ENCODE measurements at regions of chrX and their contacts with region 1.

Region 1: DNA sequence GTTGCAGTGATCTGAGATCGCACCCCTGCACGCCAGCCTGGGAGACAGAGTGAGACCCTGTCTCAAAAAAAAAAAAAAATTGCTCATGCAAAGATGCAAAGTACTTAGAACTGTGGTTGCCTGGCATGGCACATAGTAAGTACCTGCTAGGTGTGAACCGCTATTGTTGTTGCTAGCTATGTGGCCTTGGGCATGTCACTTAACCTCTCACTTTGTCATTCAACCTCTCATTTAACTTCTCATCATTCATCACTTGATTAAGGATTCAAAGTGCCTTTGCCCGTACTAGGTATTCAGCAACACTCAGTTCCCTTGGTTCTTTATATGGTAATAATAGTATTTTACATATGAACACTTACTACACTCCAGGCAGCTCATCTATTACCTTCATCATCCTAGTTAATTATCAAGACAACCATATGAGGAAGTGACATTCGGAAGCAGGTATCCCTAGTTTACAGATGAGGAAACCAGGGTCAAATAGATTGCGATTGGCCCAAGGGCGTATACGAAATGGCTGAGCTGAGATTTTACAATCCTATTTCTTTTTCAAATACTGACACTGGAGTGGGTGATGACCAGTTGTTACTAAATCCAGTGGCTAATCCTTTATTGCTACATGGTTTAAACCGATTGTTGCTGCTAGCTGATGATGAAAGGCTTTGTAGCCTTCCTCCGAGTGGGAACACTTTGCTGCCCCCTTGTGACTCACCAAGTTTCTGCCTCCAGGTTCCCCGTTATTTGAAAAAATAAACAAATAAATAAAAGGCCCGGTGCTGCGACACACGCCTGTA is 28.8 kb upstream of the SOWAHD start:
- DNase-seq: peak; percentile 47 to 63
- H3K4me3 ChIP-seq: no peak overlapping the region
- H3K4me3 Mint-ChIP-seq: no peak overlapping the region
- H3K27ac Mint-ChIP-seq: no peak overlapping the region
- H3K4me1 ChIP-seq: no peaks in the 10 kb centered on the region
- H3K4me1 Mint-ChIP-seq: no peaks in the 10 kb centered on the region
- H3K27me3 ChIP-seq: no peaks in the 10 kb centered on the region
- H3K27me3 Mint-ChIP-seq: peaks cover 7% of the 10 kb centered on the region
- CTCF ChIP-seq: peak; percentile 57 to 69

Region 2: DNA sequence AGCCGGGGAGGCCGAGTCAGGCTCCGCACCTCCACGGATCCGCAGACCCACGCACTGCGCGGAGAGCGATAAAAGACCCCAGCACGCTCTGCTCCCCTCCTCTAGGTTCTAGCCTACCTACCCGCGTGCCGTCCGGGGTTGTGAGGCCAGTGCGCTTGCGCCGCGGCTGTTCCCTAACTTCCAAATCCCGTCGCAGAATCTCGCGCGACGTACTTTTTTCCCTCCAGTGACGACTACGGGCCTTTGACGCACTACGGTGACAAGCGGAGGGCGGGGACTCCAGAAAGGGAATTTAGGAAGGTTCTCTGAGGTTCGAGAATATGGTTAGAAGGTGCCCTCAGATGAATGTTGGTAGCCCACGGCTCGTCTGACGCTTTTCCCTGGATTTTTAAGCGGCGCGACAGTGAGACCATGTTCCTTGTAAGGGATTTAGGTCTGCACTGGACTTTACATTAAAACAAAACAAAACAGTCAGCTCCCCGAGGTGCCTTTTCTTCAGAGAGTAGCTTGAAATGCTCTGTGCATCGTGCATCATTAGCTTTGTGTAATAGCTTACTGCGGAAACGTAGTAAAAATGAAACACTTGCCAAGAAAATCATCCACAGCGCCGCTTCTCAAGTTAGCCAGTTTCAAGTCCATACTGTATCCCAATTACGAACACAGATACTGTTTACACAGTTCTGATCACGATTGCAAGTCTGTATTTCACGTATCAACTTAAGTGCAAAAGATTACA is 123.2 kb before region 1 on chrX and contains the start of gene NKRF:
- CTCF ChIA-PET with region 1: interaction called, 16 read pairs
- POLR2A ChIA-PET with region 1: interaction called, 3 read pairs
- intact Hi-C with region 1: loop called (anchors 1 kb)
- DNase-seq: peak; percentile 90 to 91
- H3K4me3 ChIP-seq: peak within 1 kb of the TSS; percentile 95
- H3K4me3 Mint-ChIP-seq: peak within 1 kb of the TSS; percentile 94
- H3K27ac Mint-ChIP-seq: peak within 1 kb of the TSS; percentile 94
- H3K4me1 ChIP-seq: no peaks in the 10 kb centered on the region
- H3K4me1 Mint-ChIP-seq: no peaks in the 10 kb centered on the region
- H3K27me3 ChIP-seq: no peaks in the 10 kb centered on the region
- H3K27me3 Mint-ChIP-seq: no peaks in the 10 kb centered on the region
- CTCF ChIP-seq: no peak
- total RNA-seq, gene NKRF: 14.4 and 16.6 TPM in 2 replicates

Region 3: DNA sequence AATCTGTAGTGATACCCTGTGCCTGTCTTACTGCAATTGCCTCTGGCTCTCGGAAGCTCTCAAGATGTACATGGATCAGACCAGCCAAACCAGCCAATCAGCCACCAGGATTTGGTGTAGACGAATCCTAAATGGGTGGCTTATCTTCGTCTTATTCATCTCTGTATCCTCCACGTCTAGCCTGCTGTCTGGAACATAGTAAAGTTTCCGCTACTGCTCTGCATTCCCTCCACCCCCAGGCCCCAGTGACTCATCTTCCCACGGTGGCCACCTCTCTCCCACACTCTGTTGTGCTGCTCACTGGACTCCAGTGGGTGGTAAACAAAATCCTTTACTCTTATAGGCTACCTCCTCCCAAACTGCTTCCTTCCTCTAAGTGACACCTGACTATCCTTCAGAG is 74.5 kb before region 1 on chrX:
- CTCF ChIA-PET with region 1: no interaction called
- POLR2A ChIA-PET with region 1: no interaction called
- intact Hi-C with region 1: loop called (anchors 2 kb)
- DNase-seq: no peak
- H3K4me3 ChIP-seq: no peak overlapping the region
- H3K4me3 Mint-ChIP-seq: no peak overlapping the region
- H3K27ac Mint-ChIP-seq: no peak overlapping the region
- H3K4me1 ChIP-seq: 0 out of 2 replicates have a peak, but pooled peaks cover 7% of the 10 kb centered on the region
- H3K4me1 Mint-ChIP-seq: peaks cover 6% of the 10 kb centered on the region
- H3K27me3 ChIP-seq: no peaks in the 10 kb centered on the region
- H3K27me3 Mint-ChIP-seq: no peaks in the 10 kb centered on the region
- CTCF ChIP-seq: no peak

Region 4: DNA sequence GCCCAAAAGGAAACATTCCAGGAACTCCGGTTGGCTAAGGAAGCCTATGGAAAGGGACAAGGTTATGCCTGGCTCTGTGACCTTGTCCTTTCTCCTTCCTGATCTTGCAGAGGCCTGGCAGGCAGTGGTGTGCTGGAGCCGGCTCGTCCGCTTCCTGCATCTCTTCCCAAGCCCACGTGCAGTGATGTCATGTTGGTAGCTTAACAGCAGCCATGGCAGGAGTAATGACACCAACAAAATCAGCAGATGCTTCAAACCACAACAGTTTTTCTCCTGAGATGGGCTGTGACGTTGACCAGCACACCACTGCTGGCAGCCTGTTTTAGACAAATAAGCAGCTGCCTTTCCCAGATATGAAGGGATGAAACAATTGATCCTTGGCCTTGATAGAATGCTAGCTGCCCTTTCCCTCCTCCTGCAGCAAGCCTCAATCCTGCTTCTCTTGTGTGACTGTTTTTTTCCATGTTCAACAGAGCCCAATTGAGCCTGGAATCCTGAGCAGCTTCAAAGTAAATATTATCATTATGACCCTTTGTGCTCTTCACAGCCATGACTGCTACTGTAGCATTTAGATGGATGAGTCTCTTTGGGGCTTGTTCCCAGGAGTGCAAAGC is 60.1 kb before region 1 on chrX:
- CTCF ChIA-PET with region 1: no interaction called
- POLR2A ChIA-PET with region 1: no interaction called
- intact Hi-C with region 1: no loop called
- DNase-seq: no peak
- H3K4me3 ChIP-seq: no peak overlapping the region
- H3K4me3 Mint-ChIP-seq: no peak overlapping the region
- H3K27ac Mint-ChIP-seq: no peak overlapping the region
- H3K4me1 ChIP-seq: no peaks in the 10 kb centered on the region
- H3K4me1 Mint-ChIP-seq: peaks cover 7% of the 10 kb centered on the region
- H3K27me3 ChIP-seq: no peaks in the 10 kb centered on the region
- H3K27me3 Mint-ChIP-seq: no peaks in the 10 kb centered on the region
- CTCF ChIP-seq: no peak

Region 5: GRCh38 chrX:119698845-119699244 is 30.8 kb before region 1 on chrX:
- CTCF ChIA-PET with region 1: interaction called, 3 read pairs
- POLR2A ChIA-PET with region 1: no interaction called
- intact Hi-C with region 1: loop called (anchors 2 kb)
- DNase-seq: peak; percentile 46 to 64
- H3K4me3 ChIP-seq: no peak overlapping the region
- H3K4me3 Mint-ChIP-seq: no peak overlapping the region
- H3K27ac Mint-ChIP-seq: no peak overlapping the region
- H3K4me1 ChIP-seq: no peaks in the 10 kb centered on the region
- H3K4me1 Mint-ChIP-seq: no peaks in the 10 kb centered on the region
- H3K27me3 ChIP-seq: no peaks in the 10 kb centered on the region
- H3K27me3 Mint-ChIP-seq: no peaks in the 10 kb centered on the region
- CTCF ChIP-seq: peak; percentile 51 to 61

Region 6: DNA sequence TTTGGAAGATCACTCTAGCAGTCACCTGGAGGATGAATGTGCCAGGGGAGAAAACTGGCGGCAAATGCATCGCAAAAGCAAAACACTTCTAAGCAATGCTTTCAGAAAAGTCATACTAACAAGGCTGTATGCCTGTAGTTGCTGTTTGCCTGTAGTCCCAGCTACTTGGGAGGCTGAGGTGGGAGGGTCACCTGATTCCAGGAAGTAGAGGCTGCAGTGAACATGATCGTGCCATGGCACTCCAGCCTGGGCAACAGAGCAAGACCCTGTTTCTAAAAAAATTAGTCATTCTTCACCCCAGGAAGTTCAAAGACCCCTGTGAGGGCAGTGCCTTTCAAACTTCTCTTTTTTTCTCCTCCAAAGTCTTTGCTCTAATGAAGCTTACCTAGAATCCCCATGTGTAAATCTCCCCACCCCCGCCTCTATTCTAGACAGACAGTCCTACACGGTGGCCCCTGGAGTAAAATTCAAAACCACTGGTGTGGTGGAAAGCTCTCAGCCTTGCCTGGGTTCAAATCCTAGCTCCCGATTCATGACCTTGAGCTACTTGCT is 34.3 kb after region 1 on chrX:
- CTCF ChIA-PET with region 1: no interaction called
- POLR2A ChIA-PET with region 1: no interaction called
- intact Hi-C with region 1: no loop called
- DNase-seq: no peak
- H3K4me3 ChIP-seq: no peak overlapping the region
- H3K4me3 Mint-ChIP-seq: no peak overlapping the region
- H3K27ac Mint-ChIP-seq: no peak overlapping the region
- H3K4me1 ChIP-seq: no peaks in the 10 kb centered on the region
- H3K4me1 Mint-ChIP-seq: peaks cover 8% of the 10 kb centered on the region
- H3K27me3 ChIP-seq: no peaks in the 10 kb centered on the region
- H3K27me3 Mint-ChIP-seq: no peaks in the 10 kb centered on the region
- CTCF ChIP-seq: no peak

Region 7: DNA sequence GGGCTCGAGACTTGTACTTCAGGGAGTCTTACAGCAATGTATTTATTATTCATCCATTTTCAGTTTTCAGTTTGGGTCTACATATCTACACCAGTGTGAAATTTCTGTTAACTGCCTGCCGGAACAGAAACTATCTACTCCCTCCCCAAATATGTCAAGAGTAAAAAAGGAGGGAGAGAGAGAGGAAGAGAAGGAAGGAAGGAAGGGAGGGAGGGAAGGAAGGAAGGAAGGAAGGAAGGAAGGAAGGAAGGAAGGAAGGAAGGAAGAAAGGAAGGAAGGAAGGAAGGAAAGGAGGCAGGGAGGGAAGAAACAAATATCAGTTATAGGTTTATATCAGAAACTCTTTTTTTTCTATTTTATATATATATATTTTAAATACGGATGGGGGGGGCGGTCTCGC is 49.2 kb after region 1 on chrX:
- CTCF ChIA-PET with region 1: interaction called, 5 read pairs
- POLR2A ChIA-PET with region 1: no interaction called
- intact Hi-C with region 1: loop called (anchors 1 kb)
- DNase-seq: no peak
- H3K4me3 ChIP-seq: no peak overlapping the region
- H3K4me3 Mint-ChIP-seq: no peak overlapping the region
- H3K27ac Mint-ChIP-seq: no peak overlapping the region
- H3K4me1 ChIP-seq: no peaks in the 10 kb centered on the region
- H3K4me1 Mint-ChIP-seq: no peaks in the 10 kb centered on the region
- H3K27me3 ChIP-seq: no peaks in the 10 kb centered on the region
- H3K27me3 Mint-ChIP-seq: no peaks in the 10 kb centered on the region
- CTCF ChIP-seq: no peak

Measured in Caco-2 (cell line).